ENCODE measurements at regions of chr11 and their contacts with region 1.

Region 1: GRCh38 chr11:65013692-65014145 is 241 bp upstream of the ARL2 start:
- DNase-seq: peak; percentile 90
- ATAC-seq: peak; percentile 87
- H3K4me3 Mint-ChIP-seq: peak overlapping the region; percentile 83
- H3K27ac Mint-ChIP-seq: peak overlapping the region; percentile 96
- H3K4me1 Mint-ChIP-seq: peaks cover 25% of the 10 kb centered on the region
- H3K27me3 Mint-ChIP-seq: no peaks in the 10 kb centered on the region

Region 2: GRCh38 chr11:64121663-64122410 is 891.9 kb before region 1 on chr11:
- CTCF ChIA-PET with region 1: no interaction called
- POLR2A ChIA-PET with region 1: no interaction called
- intact Hi-C with region 1: no loop called
- DNase-seq: no peak
- ATAC-seq: no peak
- H3K4me3 Mint-ChIP-seq: no peak overlapping the region
- H3K27ac Mint-ChIP-seq: no peak overlapping the region
- H3K4me1 Mint-ChIP-seq: peaks cover 14% of the 10 kb centered on the region
- H3K27me3 Mint-ChIP-seq: no peaks in the 10 kb centered on the region

Region 3: DNA sequence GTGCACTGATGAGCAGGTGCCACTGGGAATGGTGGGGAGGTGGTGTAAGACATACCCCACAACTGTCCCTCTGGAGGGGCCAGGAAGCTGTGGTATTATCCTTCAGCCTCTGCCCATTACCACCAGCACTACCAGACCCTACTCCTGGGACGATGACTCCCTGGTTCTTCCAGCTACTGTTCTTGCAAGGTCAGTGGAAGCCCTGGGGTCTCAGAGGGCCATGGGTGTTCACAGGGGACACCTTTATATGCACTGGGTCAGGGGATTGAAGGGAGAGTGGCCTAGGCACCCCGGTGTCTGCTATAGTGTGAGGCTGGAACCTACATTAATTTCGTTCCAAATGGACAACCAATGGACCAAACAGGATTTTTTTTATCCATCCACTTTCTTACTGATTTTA is 552.6 kb before region 1 on chr11:
- CTCF ChIA-PET with region 1: no interaction called
- POLR2A ChIA-PET with region 1: no interaction called
- intact Hi-C with region 1: no loop called
- DNase-seq: no peak
- ATAC-seq: no peak
- H3K4me3 Mint-ChIP-seq: no peak overlapping the region
- H3K27ac Mint-ChIP-seq: no peak overlapping the region
- H3K4me1 Mint-ChIP-seq: no peaks in the 10 kb centered on the region
- H3K27me3 Mint-ChIP-seq: no peaks in the 10 kb centered on the region

Region 4: DNA sequence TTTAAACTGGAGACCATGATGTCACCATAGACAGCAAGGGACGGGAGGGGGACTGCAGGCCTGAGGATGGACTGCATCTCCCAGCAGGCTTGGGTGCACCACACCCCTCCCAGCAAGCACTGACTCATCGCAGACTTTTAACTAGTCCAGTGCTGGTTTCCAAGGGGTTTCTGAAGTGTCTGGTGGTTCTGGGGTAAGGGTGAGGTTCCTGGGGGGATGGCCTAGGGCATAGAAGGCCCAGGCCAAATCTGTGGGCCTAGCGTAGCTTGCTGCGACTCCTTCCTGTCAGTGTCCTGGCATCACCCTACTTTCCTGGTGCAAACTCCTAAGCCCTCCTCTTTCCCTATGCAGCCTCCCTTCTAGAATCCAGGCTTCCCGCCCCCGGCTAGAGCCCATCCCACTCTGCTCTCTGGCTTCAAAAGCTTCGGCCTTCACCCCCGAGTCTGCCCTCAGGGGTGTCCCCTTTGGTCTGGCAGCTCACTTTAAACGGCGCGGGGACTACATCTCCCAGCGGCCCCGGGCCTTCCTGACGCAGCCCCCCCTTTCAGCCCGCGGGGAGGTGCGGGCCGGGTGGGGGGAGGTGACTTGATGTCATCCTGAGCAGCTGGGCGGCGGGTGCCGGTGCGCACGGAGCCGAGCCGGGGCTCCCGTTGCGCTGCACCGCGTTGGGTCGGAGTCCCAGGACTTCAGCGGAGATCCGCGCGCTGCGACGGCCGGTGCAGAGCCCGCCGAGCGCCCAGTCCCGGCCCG is 89.4 kb before region 1 on chr11 and contains the start of gene PPP2R5B:
- CTCF ChIA-PET with region 1: interaction called, 3 read pairs
- POLR2A ChIA-PET with region 1: no interaction called
- intact Hi-C with region 1: loop called (anchors 1 to 5 kb)
- DNase-seq: peak; percentile 95
- ATAC-seq: peak; percentile 95
- H3K4me3 Mint-ChIP-seq: peak within 1 kb of the TSS; percentile 81
- H3K27ac Mint-ChIP-seq: peak within 1 kb of the TSS; percentile 98
- H3K4me1 Mint-ChIP-seq: peaks cover 9% of the 10 kb centered on the region
- H3K27me3 Mint-ChIP-seq: no peaks in the 10 kb centered on the region
- total RNA-seq, gene PPP2R5B: 13.2 to 13.5 TPM

Region 5: DNA sequence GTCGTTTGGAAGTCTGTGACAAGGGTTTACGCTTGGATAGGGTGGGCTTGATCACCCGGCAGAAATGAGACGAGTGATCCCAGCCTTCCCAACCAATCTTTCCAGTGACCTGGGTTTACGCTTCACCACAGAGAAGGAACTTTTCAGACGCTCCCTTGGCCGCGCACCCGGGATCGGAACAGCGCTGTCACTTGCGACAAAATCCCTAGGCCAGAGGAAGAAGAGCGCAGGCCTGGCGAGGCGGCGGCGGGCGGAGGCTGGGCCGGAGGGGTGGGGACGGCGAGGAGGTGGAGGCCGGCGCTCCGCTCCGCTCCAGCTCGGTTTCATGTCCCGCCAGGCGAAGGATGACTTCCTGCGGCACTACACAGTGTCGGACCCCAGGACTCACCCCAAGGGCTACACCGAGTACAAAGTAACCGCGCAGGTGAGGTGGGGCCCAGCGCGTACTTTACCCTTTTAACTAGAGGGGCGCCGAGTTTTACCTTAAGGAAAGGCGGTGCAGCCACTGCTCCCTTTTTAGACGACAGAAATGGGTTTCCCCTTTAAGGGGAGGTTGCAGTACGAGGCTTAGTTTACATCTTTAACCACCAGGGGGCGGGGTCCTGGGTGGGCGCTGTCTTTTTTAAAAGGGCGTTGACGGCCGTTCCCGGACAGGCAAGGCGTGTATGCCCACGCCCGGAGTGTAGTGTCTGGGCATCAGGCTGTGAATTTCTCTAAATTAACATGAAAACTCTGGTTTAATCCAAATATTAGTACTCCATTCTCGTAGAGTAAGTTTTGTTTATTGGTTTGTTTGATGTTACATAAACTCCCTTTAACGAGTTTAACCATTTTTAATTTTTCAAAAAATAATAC is 13.7 kb after region 1 on chr11 and contains the start of gene SNX15:
- CTCF ChIA-PET with region 1: interaction called, 41 read pairs
- POLR2A ChIA-PET with region 1: no interaction called
- intact Hi-C with region 1: loop called (anchors 1 kb)
- DNase-seq: peak; percentile 94
- ATAC-seq: peak; percentile 91
- H3K4me3 Mint-ChIP-seq: peak within 1 kb of the TSS; percentile 73
- H3K27ac Mint-ChIP-seq: peak within 1 kb of the TSS; percentile 86
- H3K4me1 Mint-ChIP-seq: peaks cover 21% of the 10 kb centered on the region
- H3K27me3 Mint-ChIP-seq: no peaks in the 10 kb centered on the region
- total RNA-seq, gene SNX15: 12.1 to 14.2 TPM

Region 6: DNA sequence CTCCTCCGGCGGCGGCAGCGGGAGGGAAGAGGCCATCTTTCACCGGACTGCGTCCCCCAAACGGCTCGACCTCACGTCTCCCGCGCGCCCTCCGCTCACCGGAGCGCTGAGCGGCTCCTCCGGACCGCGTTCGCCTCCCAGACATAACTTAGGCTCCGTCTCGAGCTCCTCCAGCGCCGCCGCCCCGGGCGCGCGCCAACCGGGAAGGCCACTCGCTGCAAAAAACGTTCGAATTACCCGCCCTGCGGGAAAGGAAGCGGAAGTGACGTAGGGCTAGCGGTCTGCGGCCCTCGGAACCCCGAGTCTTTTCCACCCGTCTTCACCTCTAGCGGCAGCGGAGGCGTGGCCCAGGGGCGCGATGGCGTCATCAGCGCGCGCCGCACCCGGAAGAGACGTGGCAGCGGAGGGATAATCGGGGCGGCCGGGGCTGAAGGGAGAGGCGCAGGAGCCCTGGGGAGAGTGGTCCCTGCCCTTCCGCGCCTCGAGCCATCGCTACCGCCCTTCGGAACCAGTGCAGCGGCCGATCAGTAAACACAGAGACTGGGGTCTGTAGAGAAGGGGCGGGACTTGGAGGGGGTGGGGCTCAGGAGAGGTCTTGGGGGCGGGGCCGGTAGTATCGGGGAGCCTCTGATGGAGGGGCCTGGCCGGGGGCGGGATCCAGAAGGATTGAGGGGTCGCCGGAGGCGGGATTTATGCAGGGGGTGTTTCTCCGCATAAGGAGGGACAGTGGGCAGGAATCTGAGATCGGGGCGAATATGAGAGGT is 70.3 kb after region 1 on chr11 and contains the starts of genes CDCA5 and ZFPL1:
- CTCF ChIA-PET with region 1: interaction called, 4 read pairs
- POLR2A ChIA-PET with region 1: interaction called, 3 read pairs
- intact Hi-C with region 1: loop called in 1 of 2 experiments (anchors 1 kb)
- DNase-seq: peak; percentile 97
- ATAC-seq: peak; percentile 81
- H3K4me3 Mint-ChIP-seq: peak within 1 kb of the TSS; percentile 99
- H3K27ac Mint-ChIP-seq: peak within 1 kb of the TSS; percentile 98
- H3K4me1 Mint-ChIP-seq: peaks cover 41% of the 10 kb centered on the region
- H3K27me3 Mint-ChIP-seq: no peaks in the 10 kb centered on the region
- total RNA-seq, gene CDCA5: 111 to 119 TPM
- total RNA-seq, gene ZFPL1: 24.2 to 31.8 TPM

Region 7: DNA sequence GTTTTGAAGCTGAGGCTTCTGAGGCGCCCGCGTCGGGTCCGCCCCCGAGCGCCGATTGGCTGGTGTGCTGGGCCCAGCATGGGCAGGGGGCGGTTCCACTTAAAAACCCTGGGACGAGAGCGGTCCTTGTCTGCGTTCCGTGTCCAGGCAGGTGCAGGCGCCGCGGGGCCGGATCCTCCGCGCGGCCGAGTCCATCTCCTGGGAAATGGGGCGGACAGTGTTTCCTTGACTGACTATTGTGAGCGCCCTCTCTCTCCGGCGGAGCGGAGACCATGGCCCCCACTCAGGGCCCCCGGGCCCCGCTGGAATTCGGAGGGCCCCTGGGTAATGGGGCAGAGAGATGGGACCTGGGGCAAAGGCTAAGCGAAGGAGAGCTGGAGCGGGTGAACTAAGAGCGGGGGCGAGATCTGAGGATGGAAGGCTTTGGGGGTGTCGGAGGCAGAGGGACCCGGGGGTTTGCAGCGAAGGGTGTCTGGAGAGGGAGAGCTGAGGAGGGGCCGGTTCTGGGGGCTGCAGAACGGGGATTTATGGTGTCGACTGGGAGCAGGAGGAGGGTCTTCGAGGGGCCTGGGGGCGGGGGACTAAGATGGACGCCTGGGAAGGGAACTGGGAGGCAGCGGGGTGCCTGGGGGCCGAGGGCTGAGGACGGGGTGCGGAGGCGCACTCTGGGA is 98.2 kb after region 1 on chr11 and contains the start of gene TM7SF2:
- CTCF ChIA-PET with region 1: interaction called, 6 read pairs
- POLR2A ChIA-PET with region 1: no interaction called
- intact Hi-C with region 1: loop called (anchors 1 kb)
- DNase-seq: peak; percentile 98
- ATAC-seq: peak; percentile 78
- H3K4me3 Mint-ChIP-seq: peak within 1 kb of the TSS; percentile 83
- H3K27ac Mint-ChIP-seq: peak within 1 kb of the TSS; percentile 74
- H3K4me1 Mint-ChIP-seq: peaks cover 50% of the 10 kb centered on the region
- H3K27me3 Mint-ChIP-seq: no peaks in the 10 kb centered on the region
- total RNA-seq, gene TM7SF2: 17.4 to 18.1 TPM

Region 8: GRCh38 chr11:65314501-65315203 is 300.9 kb after region 1 on chr11 and contains the start of gene CDC42EP2:
- CTCF ChIA-PET with region 1: interaction called, 3 read pairs
- POLR2A ChIA-PET with region 1: no interaction called
- intact Hi-C with region 1: loop called in 1 of 2 experiments (anchors 5 kb)
- DNase-seq: peak; percentile 87
- ATAC-seq: peak; percentile 90
- H3K4me3 Mint-ChIP-seq: peak within 1 kb of the TSS; percentile 73
- H3K27ac Mint-ChIP-seq: no peak within 1 kb of the TSS
- H3K4me1 Mint-ChIP-seq: peaks cover 11% of the 10 kb centered on the region
- H3K27me3 Mint-ChIP-seq: peaks cover 5% of the 10 kb centered on the region
- total RNA-seq, gene CDC42EP2: 0.91 to 0.93 TPM

Measured in activated CD4-positive, alpha-beta T cell treated with anti-CD3 and anti-CD28 coated beads for 36 hours (primary cell).